ENCODE measurements at regions of chr16 and their contacts with region 1.

Region 1: GRCh38 chr16:87387942-87388817 is 4.0 kb upstream of the MAP1LC3B start:
- DNase-seq: peak; percentile 83 to 99 (median 92)

Region 2: GRCh38 chr16:86554917-86555703 is 833.1 kb before region 1 on chr16 and contains the start of gene MTHFSD:
- intact Hi-C with region 1: loop called (anchors 10 kb)
- DNase-seq: peak; percentile 84 to 98 (median 90)

Region 3: GRCh38 chr16:86901491-86902260 is 486.5 kb before region 1 on chr16:
- intact Hi-C with region 1: no loop called
- DNase-seq: peak in 2 of 10 donors; percentile 37 to 71

Region 4: DNA sequence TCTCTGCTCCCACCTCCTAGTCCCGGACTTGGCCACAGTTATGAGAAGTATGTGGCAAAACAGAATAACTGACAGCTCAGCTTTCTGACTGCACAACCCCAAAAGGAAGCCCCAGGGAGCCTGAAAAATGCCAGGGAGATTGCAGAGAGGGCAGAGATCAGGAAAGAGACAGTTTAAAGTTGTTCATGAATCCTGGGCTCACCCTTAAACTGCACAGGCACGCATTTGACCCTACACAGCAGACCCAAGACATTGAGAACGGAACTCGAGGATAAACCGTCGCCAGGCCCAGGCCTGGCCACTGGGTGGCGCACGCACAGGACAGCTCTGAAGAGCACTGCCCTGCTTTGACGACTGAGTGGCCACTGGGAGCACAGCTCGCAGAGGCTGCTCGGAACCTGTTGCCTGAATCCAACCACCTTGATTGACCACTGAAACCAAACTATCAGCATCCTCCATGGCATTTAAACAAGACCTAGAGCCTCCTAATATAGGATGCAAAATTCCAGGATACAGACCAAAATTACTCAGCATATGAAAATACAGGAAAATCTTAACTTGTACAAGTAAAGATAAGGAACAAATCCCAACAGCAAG is 185.0 kb before region 1 on chr16:
- intact Hi-C with region 1: no loop called
- DNase-seq: peak in 7 of 10 donors; percentile 31 to 94 (median 54)

Region 5: GRCh38 chr16:87263471-87263961 is 124.7 kb before region 1 on chr16:
- intact Hi-C with region 1: no loop called
- DNase-seq: peak in 1 of 10 donors; percentile 54

Region 6: GRCh38 chr16:87316923-87317749 is 71.0 kb before region 1 on chr16 and contains the start of gene C16orf95:
- intact Hi-C with region 1: loop called (anchors 2 kb)
- DNase-seq: peak; percentile 93 to 99 (median 98)

Region 7: GRCh38 chr16:87324411-87325275 is 63.5 kb before region 1 on chr16:
- intact Hi-C with region 1: loop called (anchors 5 kb)
- DNase-seq: peak in 7 of 10 donors; percentile 39 to 89 (median 56)

Region 8: GRCh38 chr16:87492721-87493607 is 104.8 kb after region 1 on chr16 and contains the start of gene ZCCHC14:
- intact Hi-C with region 1: loop called (anchors 5 kb)
- DNase-seq: peak; percentile 98 to 100 (median 99)

Region 9: DNA sequence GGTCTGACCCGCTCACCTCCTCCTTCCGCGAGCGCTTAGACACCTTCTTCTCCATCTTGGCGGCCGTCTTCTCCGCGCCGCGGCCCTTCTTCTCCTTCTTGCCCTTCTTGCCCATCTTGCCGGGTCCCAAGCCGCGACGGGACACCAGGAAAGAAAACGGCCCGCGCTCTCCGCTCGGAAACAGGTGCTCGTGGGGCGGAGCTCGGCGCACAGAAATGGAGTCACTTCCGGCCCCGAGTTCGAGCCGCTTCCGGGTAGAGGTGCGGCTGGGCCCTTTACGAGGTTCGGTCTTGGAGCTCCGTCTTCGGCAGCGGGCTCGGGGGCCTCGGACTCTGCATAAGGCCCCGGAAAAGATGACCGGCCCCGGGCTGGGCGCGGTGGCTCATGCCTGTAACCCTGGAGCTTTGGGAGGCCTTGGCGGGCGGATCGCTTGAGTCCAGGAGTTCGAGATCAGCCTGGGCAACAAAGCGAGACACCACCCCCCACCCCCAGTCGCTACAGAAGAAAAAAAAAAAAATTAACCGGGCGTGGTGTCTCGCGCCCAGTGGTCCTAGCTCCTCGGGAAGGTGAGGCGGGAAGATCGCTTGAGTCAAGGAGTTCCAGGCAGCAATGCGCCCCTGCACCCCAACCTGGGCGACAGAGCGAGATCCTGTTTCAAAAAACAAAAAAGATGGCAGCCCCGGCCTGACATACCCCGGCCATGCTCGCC is 377.8 kb after region 1 on chr16 and contains the start of gene KLHDC4:
- intact Hi-C with region 1: loop called (anchors 5 kb)
- DNase-seq: peak; percentile 86 to 98 (median 92)